ENCODE measurements at regions of chr21 and their contacts with region 1.

Region 1: GRCh38 chr21:36260030-36260787 is 59.8 kb upstream of the MORC3 start:
- DNase-seq: peak; percentile 87
- H3K4me3 ChIP-seq: peak overlapping the region; percentile 49 to 98 (median 91)
- H3K27ac ChIP-seq: peak overlapping the region; percentile 57
- H3K4me1 ChIP-seq: peaks cover 3% of the 10 kb centered on the region
- H3K27me3 ChIP-seq: no peaks in the 10 kb centered on the region
- CTCF ChIP-seq: peak; percentile 50 to 58
- POLR2A ChIP-seq: no peak

Region 2: GRCh38 chr21:36125512-36126222 is 134.5 kb before region 1 on chr21:
- CTCF ChIA-PET with region 1: no interaction called
- POLR2A ChIA-PET with region 1: no interaction called
- dilution Hi-C with region 1: no loop called
- intact Hi-C with region 1: no loop called
- DNase-seq: peak; percentile 58
- H3K4me3 ChIP-seq: no peak overlapping the region
- H3K27ac ChIP-seq: no peak overlapping the region
- H3K4me1 ChIP-seq: no peaks in the 10 kb centered on the region
- H3K27me3 ChIP-seq: peaks cover 3% of the 10 kb centered on the region in 2 experiments
- CTCF ChIP-seq: peak; percentile 92
- POLR2A ChIP-seq: no peak

Region 3: DNA sequence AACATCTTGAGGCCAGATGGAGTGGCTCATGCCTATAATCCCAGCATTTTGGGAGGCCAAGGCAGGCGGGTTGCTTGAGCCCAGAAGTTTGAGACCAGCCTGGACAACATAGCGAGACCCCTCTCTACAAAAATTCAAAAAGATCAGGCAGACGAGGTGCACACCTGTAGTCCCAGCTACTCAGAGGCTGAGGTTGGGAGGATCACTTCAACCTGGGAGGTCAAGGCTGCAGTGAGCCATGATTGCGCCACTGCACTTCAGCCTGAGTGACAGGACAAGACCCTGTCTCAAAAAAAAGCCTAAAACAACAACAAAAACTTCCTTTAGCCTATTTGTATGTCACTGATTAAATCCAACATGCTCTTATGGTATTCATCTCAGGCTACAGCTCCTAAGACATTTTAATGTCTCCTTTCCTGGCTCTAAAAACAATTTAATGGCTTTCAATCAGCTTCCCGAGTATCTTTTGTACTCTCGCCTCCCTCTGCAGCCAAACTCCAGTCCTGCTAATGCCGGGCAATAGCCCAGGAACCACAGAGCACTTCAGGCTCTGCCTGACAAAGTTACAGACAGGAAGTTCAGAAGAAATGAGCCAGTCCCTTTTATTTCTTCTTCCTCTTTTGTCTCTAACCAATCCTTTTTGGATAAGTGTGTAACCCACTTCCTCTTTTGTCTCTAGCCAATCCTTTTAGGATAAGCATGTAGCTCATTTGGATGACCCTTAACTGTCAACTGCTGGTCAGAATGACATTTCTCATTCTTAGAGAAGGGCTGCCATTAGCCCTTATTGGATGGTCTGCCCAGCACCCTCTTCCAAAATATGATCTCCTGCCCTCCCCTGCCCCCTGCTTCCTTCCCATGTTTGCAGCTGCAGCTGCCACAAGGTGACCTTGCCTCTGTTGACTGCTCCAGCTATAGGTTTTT is 110.2 kb before region 1 on chr21:
- CTCF ChIA-PET with region 1: interaction called, 3 read pairs
- POLR2A ChIA-PET with region 1: no interaction called
- dilution Hi-C with region 1: no loop called
- intact Hi-C with region 1: loop called (anchors 5 kb)
- DNase-seq: peak; percentile 40
- H3K4me3 ChIP-seq: no peak overlapping the region
- H3K27ac ChIP-seq: no peak overlapping the region
- H3K4me1 ChIP-seq: peaks cover 11% of the 10 kb centered on the region
- H3K27me3 ChIP-seq: peaks cover 0 to under 1% of the 10 kb centered on the region in 2 experiments
- CTCF ChIP-seq: no peak
- POLR2A ChIP-seq: no peak

Region 4: DNA sequence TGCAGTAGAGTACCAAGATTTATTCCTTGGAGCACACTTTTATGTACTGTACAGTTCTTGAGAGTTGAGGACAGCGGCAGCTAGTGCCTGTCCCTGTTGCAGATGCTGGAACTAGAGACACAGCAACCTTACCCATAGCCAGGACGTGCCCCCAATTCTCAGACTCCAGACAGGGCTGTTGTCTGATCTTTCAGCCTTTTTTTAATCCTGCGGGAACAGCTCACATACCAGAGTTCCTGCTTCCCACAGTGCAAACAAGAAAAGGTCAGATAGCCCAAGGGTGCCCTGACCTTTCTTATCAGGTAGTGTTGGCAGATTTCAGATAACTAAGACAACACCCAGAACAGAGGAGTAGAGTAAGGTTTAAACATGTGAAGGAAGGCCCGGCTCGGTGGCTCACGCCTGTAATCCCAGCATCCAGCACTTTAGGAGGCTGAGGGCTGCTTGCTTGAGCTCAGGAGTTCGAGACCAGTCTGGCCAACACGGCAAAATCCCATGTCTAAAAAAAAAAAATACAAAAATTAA is 25.1 kb before region 1 on chr21:
- CTCF ChIA-PET with region 1: no interaction called
- POLR2A ChIA-PET with region 1: no interaction called
- dilution Hi-C with region 1: no loop called
- intact Hi-C with region 1: no loop called
- DNase-seq: no peak
- H3K4me3 ChIP-seq: no peak overlapping the region
- H3K27ac ChIP-seq: no peak overlapping the region
- H3K4me1 ChIP-seq: no peaks in the 10 kb centered on the region
- H3K27me3 ChIP-seq: no peaks in the 10 kb centered on the region
- CTCF ChIP-seq: no peak
- POLR2A ChIP-seq: no peak

Region 5: GRCh38 chr21:36246080-36246631 is 14.1 kb before region 1 on chr21:
- CTCF ChIA-PET with region 1: interaction called, 14 read pairs
- POLR2A ChIA-PET with region 1: no interaction called
- dilution Hi-C with region 1: no loop called
- intact Hi-C with region 1: no loop called
- DNase-seq: no peak
- H3K4me3 ChIP-seq: no peak overlapping the region
- H3K27ac ChIP-seq: no peak overlapping the region
- H3K4me1 ChIP-seq: no peaks in the 10 kb centered on the region
- H3K27me3 ChIP-seq: no peaks in the 10 kb centered on the region
- CTCF ChIP-seq: no peak
- POLR2A ChIP-seq: no peak

Region 6: DNA sequence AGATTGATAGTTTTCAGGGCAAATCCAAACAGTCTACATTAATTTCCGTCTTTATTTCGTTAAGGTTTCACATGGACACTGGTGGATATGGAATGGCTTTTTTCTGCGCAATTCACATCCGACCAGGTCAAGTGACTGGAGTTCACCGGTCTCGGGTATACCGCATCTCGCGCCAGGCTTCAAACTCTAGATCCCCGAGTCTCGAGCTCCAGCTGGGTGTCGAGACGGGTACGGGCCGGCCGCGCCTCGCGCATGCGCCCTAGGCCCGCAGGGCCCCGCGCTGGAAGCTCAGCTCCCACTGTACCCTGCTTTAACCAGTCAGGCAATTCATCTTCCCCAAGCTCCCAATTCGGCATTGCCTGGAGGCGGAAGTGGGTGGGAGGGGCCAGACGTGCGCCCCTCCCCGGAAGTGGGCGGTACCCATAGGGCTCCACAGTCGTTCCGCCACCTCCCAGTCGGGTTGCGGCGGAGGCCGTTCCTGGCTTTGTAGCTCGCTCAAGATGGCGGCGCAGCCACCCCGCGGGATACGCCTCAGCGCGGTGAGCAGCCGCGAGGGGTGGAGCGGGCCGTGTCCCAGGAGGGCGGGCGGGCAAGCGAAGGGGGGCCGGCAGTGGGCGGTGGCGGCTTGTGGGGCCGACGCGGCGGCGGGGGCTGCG is 59.7 kb after region 1 on chr21 and contains the start of gene MORC3:
- CTCF ChIA-PET with region 1: interaction called, 11 read pairs
- POLR2A ChIA-PET with region 1: interaction called, 4 read pairs
- dilution Hi-C with region 1: no loop called
- intact Hi-C with region 1: no loop called
- DNase-seq: peak; percentile 100
- H3K4me3 ChIP-seq: peak within 1 kb of the TSS; percentile 77 to 97 (median 95)
- H3K27ac ChIP-seq: peak within 1 kb of the TSS; percentile 83
- H3K4me1 ChIP-seq: peaks cover 19% of the 10 kb centered on the region
- H3K27me3 ChIP-seq: peaks cover 0 to 5% of the 10 kb centered on the region in 2 experiments
- CTCF ChIP-seq: no peak
- POLR2A ChIP-seq: peak; percentile 97
- total RNA-seq, gene MORC3: 20.0 and 25.3 TPM in 2 replicates

Region 7: DNA sequence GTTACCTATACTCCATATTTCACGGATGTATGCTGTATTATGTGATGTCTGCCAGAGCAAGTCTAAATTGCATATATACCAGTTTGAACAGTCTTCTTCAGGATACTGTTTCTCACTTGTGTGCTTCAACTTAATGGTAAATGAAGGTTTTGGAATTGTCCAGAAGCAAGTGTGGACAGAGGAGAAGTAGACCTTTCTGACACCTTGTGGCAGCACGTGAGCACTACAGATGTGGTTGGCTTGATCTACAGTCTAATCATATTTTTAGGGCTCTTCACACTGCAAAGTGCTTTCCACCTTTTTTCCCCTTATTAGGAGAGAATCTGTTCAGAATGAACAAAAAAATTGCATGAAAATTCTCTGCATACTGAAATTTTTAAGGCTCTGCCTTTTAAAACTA is 70.7 kb after region 1 on chr21:
- CTCF ChIA-PET with region 1: interaction called, 4 read pairs
- POLR2A ChIA-PET with region 1: no interaction called
- dilution Hi-C with region 1: no loop called
- intact Hi-C with region 1: loop called (anchors 1 kb)
- DNase-seq: peak; percentile 64
- H3K4me3 ChIP-seq: no peak overlapping the region
- H3K27ac ChIP-seq: no peak overlapping the region
- H3K4me1 ChIP-seq: peaks cover 20% of the 10 kb centered on the region
- H3K27me3 ChIP-seq: no peaks in the 10 kb centered on the region
- CTCF ChIP-seq: peak; percentile 65 to 73
- POLR2A ChIP-seq: no peak